Esophagus muscularis mucosa (tissue), 4 donors: ENCODE measurements at regions of chr15 and their contacts with region 1.

Region 1: GRCh38 chr15:78415286-78415685 is 22.7 kb upstream of the IREB2 start:
- DNase-seq: no peak
- H3K4me3 ChIP-seq: no peak overlapping the region
- H3K27ac ChIP-seq: no peak overlapping the region
- H3K4me1 ChIP-seq: no peaks in the 10 kb centered on the region
- H3K27me3 ChIP-seq: peaks cover 0 to 8% (median 0%) of the 10 kb centered on the region in 4 donors
- CTCF ChIP-seq: no peak
- EP300 ChIP-seq: no peak
- POLR2A ChIP-seq: no peak

Region 2: DNA sequence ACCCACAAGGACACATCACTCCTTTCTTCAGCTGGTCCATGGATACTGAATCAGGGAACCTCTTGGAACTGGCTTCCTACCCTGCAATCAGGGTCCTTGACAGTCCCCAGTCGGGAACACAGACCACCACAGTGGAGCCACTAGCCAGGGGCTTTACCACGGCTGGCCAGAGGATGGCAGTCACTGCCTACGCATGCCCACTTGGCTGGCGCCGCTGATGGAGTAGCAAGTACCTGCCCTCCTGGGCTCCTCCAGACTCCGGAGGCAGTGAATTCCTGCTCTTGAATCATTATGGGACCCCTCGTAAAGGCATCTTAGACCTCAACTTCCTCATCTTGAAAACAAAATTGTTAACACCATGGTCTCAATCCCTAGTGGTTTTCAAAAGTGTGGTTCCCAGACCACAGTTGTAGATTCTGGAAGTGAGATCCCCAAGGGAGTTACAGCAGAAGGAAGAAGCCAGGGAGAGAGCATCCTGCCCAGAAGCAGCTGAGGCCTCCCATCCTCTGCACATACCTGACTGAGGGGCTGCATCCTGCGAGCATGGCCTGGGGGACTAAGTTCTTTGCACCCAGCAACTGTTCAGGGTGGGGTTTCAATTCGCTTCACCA is 106.8 kb before region 1 on chr15:
- intact Hi-C with region 1: no loop called
- DNase-seq: no peak
- H3K4me3 ChIP-seq: no peak overlapping the region
- H3K27ac ChIP-seq: no peak overlapping the region
- H3K4me1 ChIP-seq: no peaks in the 10 kb centered on the region
- H3K27me3 ChIP-seq: peaks cover 0 to 63% (median 7%) of the 10 kb centered on the region in 4 donors
- CTCF ChIP-seq: peak; percentile 53 to 62 (median 56)
- EP300 ChIP-seq: no peak
- POLR2A ChIP-seq: no peak

Region 3: GRCh38 chr15:78353093-78353492 is 62.2 kb before region 1 on chr15:
- intact Hi-C with region 1: loop called (anchors 10 kb)
- DNase-seq: no peak
- H3K4me3 ChIP-seq: no peak overlapping the region
- H3K27ac ChIP-seq: no peak overlapping the region
- H3K4me1 ChIP-seq: no peaks in the 10 kb centered on the region
- H3K27me3 ChIP-seq: peaks cover 0 to 53% (median 0%) of the 10 kb centered on the region in 4 donors
- CTCF ChIP-seq: no peak
- EP300 ChIP-seq: no peak
- POLR2A ChIP-seq: no peak